Activated CD4-positive, alpha-beta memory T cell treated with anti-CD3 and anti-CD28 coated beads for 36 hours (primary cell): ENCODE measurements at regions of chr19 and their contacts with region 1.

Region 1: GRCh38 chr19:44113138-44113783 is at the start of gene ZNF225:
- DNase-seq: peak; percentile 92
- H3K4me3 Mint-ChIP-seq: peak within 1 kb of the TSS; percentile 91
- H3K27ac Mint-ChIP-seq: peak within 1 kb of the TSS; percentile 74
- H3K4me1 Mint-ChIP-seq: peaks cover 22% of the 10 kb centered on the region
- H3K27me3 Mint-ChIP-seq: no peaks in the 10 kb centered on the region
- total RNA-seq, gene ZNF225: 2.5 to 2.9 TPM

Region 2: GRCh38 chr19:43983912-43984686 is 129.2 kb before region 1 on chr19 and contains the start of gene ZNF155:
- CTCF ChIA-PET with region 1: no interaction called
- POLR2A ChIA-PET with region 1: no interaction called
- intact Hi-C with region 1: loop called (anchors 5 kb)
- DNase-seq: peak; percentile 84
- H3K4me3 Mint-ChIP-seq: peak within 1 kb of the TSS; percentile 97
- H3K27ac Mint-ChIP-seq: peak within 1 kb of the TSS; percentile 89
- H3K4me1 Mint-ChIP-seq: peaks cover 7% of the 10 kb centered on the region
- H3K27me3 Mint-ChIP-seq: no peaks in the 10 kb centered on the region
- total RNA-seq, gene ZNF155: 2.9 to 4.5 TPM

Region 3: GRCh38 chr19:44071824-44072542 is 41.3 kb before region 1 on chr19 and contains the start of gene ZNF284:
- CTCF ChIA-PET with region 1: no interaction called
- POLR2A ChIA-PET with region 1: no interaction called
- intact Hi-C with region 1: loop called (anchors 1 kb)
- DNase-seq: peak; percentile 87
- H3K4me3 Mint-ChIP-seq: peak within 1 kb of the TSS; percentile 87
- H3K27ac Mint-ChIP-seq: peak within 1 kb of the TSS; percentile 43
- H3K4me1 Mint-ChIP-seq: peaks cover 20% of the 10 kb centered on the region
- H3K27me3 Mint-ChIP-seq: no peaks in the 10 kb centered on the region
- total RNA-seq, gene ZNF284: 1.1 to 1.4 TPM

Region 4: GRCh38 chr19:44141191-44142058 is 28.2 kb after region 1 on chr19 and contains the start of gene ZNF234:
- CTCF ChIA-PET with region 1: no interaction called
- POLR2A ChIA-PET with region 1: interaction called, 3 read pairs
- intact Hi-C with region 1: loop called (anchors 2 kb)
- DNase-seq: peak; percentile 78
- H3K4me3 Mint-ChIP-seq: peak within 1 kb of the TSS; percentile 91
- H3K27ac Mint-ChIP-seq: peak within 1 kb of the TSS; percentile 83
- H3K4me1 Mint-ChIP-seq: peaks cover 15% of the 10 kb centered on the region
- H3K27me3 Mint-ChIP-seq: no peaks in the 10 kb centered on the region
- total RNA-seq, gene ZNF234: 7.3 to 8.7 TPM

Region 5: DNA sequence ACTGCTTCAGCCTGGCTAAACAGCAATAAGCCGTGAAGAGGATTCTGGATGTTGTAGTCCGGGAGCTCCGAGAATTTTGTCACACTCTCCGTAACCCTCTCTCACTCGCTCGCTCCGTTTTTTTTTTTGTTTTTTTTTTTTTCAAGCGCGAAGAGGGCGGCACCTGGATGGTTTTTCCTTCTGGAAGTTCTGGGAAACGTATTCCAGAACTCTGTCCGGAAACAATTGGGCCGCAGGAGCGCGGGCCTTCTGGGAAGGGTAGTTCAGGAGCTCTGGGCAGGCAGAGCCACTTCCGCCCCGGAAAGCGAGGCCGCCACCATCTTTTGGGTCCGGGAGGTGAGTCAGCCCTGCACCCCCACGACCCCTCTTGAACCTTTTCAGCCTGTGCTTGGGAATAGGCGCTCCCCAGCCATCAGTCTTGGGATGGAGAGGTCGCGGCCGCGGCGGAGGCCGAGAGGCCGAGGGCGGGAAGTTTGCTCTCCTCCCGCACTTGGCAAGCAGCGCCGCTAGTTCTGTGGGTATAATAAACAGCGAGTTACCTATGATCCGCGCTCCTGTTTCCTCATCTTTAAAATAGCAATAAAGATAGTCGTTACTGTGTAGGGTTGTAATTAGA is 99.1 kb after region 1 on chr19 and contains the start of gene ZNF227:
- CTCF ChIA-PET with region 1: no interaction called
- POLR2A ChIA-PET with region 1: no interaction called
- intact Hi-C with region 1: loop called (anchors 2 kb)
- DNase-seq: peak; percentile 89
- H3K4me3 Mint-ChIP-seq: peak within 1 kb of the TSS; percentile 91
- H3K27ac Mint-ChIP-seq: peak within 1 kb of the TSS; percentile 88
- H3K4me1 Mint-ChIP-seq: peaks cover 23% of the 10 kb centered on the region
- H3K27me3 Mint-ChIP-seq: no peaks in the 10 kb centered on the region
- total RNA-seq, gene ZNF227: 13.5 TPM

Region 6: DNA sequence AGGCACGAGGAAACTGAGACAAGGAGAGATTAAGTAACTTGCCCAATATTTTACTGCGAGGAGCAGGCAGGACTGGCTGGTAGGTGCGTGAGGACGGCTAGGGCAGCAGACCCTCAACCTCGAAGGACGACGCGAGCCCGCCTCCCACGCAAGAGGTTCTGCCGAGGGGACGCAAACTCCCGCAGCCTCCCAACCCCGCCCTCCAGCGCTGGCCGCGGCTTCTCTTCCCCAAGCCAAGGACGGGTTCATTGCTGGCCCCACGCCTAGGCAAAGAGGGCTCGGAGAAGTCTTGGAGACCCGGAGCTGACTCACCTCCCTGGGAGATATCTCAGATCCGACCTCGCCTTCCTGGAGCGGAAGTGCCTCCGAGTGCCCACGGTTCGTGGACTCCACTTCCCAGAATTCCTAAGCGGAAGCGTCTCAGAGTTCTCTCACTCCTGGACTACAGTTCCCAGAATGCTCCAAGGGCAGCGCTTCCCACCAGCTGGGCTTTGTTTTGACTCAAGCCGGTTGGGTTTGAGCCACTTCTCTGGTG is 191.5 kb after region 1 on chr19 and contains the start of gene ZNF235:
- CTCF ChIA-PET with region 1: no interaction called
- POLR2A ChIA-PET with region 1: no interaction called
- intact Hi-C with region 1: loop called (anchors 1 kb)
- DNase-seq: peak; percentile 87
- H3K4me3 Mint-ChIP-seq: peak within 1 kb of the TSS; percentile 83
- H3K27ac Mint-ChIP-seq: peak within 1 kb of the TSS; percentile 18
- H3K4me1 Mint-ChIP-seq: peaks cover 15% of the 10 kb centered on the region
- H3K27me3 Mint-ChIP-seq: no peaks in the 10 kb centered on the region
- total RNA-seq, gene ZNF235: 1.2 to 1.3 TPM

Region 7: GRCh38 chr19:44903602-44904425 is 790.6 kb after region 1 on chr19:
- CTCF ChIA-PET with region 1: no interaction called
- POLR2A ChIA-PET with region 1: no interaction called
- intact Hi-C with region 1: no loop called
- DNase-seq: peak; percentile 82
- H3K4me3 Mint-ChIP-seq: no peak overlapping the region
- H3K27ac Mint-ChIP-seq: no peak overlapping the region
- H3K4me1 Mint-ChIP-seq: peaks cover 6% of the 10 kb centered on the region
- H3K27me3 Mint-ChIP-seq: peaks cover 18% of the 10 kb centered on the region